A673 (cell line): ENCODE measurements at regions of chr1 and their contacts with region 1.

Region 1: GRCh38 chr1:90964444-90965035 is 57.3 kb downstream of the ZNF644 start:
- DNase-seq: peak; percentile 56
- H3K4me3 ChIP-seq: no peak overlapping the region
- H3K27ac ChIP-seq: no peak overlapping the region
- H3K4me1 ChIP-seq: no peaks in the 10 kb centered on the region
- H3K27me3 ChIP-seq: no peaks in the 10 kb centered on the region
- CTCF ChIP-seq: peak; percentile 75

Region 2: GRCh38 chr1:90616395-90616794 is 348.1 kb before region 1 on chr1:
- CTCF ChIA-PET with region 1: no interaction called
- POLR2A ChIA-PET with region 1: no interaction called
- intact Hi-C with region 1: loop called (anchors 5 kb)
- DNase-seq: peak; percentile 73
- H3K4me3 ChIP-seq: no peak overlapping the region
- H3K27ac ChIP-seq: no peak overlapping the region
- H3K4me1 ChIP-seq: peaks cover 32% of the 10 kb centered on the region
- H3K27me3 ChIP-seq: no peaks in the 10 kb centered on the region
- CTCF ChIP-seq: peak; percentile 70

Region 3: GRCh38 chr1:90650401-90650800 is 314.1 kb before region 1 on chr1:
- CTCF ChIA-PET with region 1: interaction called, 12 read pairs
- POLR2A ChIA-PET with region 1: no interaction called
- intact Hi-C with region 1: no loop called
- DNase-seq: no peak
- H3K4me3 ChIP-seq: no peak overlapping the region
- H3K27ac ChIP-seq: no peak overlapping the region
- H3K4me1 ChIP-seq: no peaks in the 10 kb centered on the region
- H3K27me3 ChIP-seq: no peaks in the 10 kb centered on the region
- CTCF ChIP-seq: no peak